ENCODE measurements at regions of chr7 and their contacts with region 1.

Region 1: DNA sequence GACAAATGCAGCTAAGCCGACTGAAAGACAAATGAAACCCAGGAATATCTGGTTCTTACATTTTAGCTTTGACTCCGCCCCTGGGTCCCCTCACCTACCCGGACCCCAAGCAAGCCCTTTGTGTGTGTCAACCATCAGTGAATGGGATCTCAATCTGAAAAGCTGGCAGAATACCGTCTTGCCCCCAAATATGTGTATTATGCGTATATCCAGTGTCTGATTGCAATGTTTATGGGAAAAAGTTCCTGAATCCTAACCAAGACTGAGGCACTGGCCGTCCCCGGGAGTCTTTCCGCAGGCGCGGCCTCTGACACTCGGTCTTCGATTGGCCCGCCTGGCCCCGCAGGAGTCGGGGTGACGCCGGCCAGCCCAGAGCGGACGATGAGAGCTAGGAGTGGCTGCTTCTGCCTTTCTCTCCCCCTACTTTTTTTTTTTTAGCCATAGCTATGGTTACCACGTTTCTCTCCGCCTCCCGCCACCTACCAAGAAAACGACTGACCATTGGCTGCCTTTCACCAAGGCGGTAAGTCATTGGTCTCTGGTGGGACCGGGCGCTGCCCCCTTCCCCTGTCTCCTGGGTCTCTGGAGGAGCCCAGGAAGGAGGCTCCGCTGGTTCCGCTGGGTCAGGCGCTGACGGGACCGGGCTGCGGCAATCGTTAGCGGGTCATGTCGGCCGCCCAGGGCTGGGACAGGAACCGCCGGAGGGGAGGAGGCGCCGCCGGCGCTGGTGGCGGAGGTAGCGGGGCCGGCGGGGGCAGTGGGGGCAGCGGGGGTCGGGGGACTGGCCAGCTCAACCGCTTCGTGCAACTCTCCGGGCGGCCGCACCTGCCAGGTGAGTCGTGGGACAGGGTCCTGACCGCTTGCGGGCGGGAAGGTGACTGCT is at the start of gene KLHDC10:
- DNase-seq: peak; percentile 97
- H3K4me3 Mint-ChIP-seq: peak within 1 kb of the TSS; percentile 88
- H3K27ac Mint-ChIP-seq: peak within 1 kb of the TSS; percentile 75
- H3K4me1 Mint-ChIP-seq: peaks cover 34% of the 10 kb centered on the region
- H3K27me3 Mint-ChIP-seq: no peaks in the 10 kb centered on the region
- total RNA-seq, gene KLHDC10: 15.5 to 17.3 TPM

Region 2: GRCh38 chr7:130047821-130048220 is 22.4 kb before region 1 on chr7:
- CTCF ChIA-PET with region 1: interaction called, 10 read pairs
- POLR2A ChIA-PET with region 1: interaction called, 12 read pairs
- DNase-seq: no peak
- H3K4me3 Mint-ChIP-seq: no peak overlapping the region
- H3K27ac Mint-ChIP-seq: no peak overlapping the region
- H3K4me1 Mint-ChIP-seq: peaks cover 20% of the 10 kb centered on the region
- H3K27me3 Mint-ChIP-seq: no peaks in the 10 kb centered on the region

Region 3: GRCh38 chr7:130084037-130084875 is 14.0 kb after region 1 on chr7:
- CTCF ChIA-PET with region 1: interaction called, 11 read pairs
- POLR2A ChIA-PET with region 1: no interaction called
- DNase-seq: no peak
- H3K4me3 Mint-ChIP-seq: no peak overlapping the region
- H3K27ac Mint-ChIP-seq: no peak overlapping the region
- H3K4me1 Mint-ChIP-seq: peaks cover 5% of the 10 kb centered on the region
- H3K27me3 Mint-ChIP-seq: no peaks in the 10 kb centered on the region

Region 4: GRCh38 chr7:130205084-130205947 is 135.1 kb after region 1 on chr7 and contains the start of gene TMEM209:
- CTCF ChIA-PET with region 1: interaction called, 9 read pairs
- POLR2A ChIA-PET with region 1: interaction called, 19 read pairs
- DNase-seq: peak; percentile 95
- H3K4me3 Mint-ChIP-seq: peak within 1 kb of the TSS; percentile 97
- H3K27ac Mint-ChIP-seq: peak within 1 kb of the TSS; percentile 94
- H3K4me1 Mint-ChIP-seq: peaks cover 42% of the 10 kb centered on the region
- H3K27me3 Mint-ChIP-seq: no peaks in the 10 kb centered on the region
- total RNA-seq, gene TMEM209: 35.5 to 35.7 TPM

Region 5: DNA sequence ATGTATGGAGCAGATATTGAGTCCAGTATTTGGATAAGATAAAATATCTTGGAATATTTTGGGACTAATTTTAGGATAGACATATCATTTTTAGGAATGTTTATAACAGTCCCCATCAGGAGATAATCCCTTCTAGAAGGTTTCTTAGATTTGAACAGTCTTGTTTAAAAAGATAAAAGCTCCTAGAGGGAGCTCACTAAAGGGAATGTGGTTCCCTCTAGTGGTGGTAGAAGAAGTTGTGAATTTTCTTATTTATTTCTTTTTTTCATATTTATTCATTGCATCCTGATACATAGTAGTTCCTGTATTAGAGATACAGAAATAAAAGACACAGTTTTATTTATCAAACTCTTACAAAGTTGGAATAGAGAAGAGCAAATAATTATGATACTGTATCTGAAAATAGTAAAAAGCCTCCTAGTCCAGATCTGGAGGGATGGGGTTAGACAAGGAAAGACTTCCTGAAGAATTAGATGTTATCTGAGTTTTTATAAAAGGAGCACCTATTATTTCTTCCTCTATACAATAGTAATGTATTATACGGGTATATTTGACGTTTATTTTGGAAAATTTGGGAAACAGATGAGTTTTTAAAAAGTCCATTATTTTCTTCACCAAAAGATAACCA is 688.3 kb after region 1 on chr7:
- CTCF ChIA-PET with region 1: interaction called, 45 read pairs
- POLR2A ChIA-PET with region 1: no interaction called
- DNase-seq: no peak
- H3K4me3 Mint-ChIP-seq: no peak overlapping the region
- H3K27ac Mint-ChIP-seq: no peak overlapping the region
- H3K4me1 Mint-ChIP-seq: no peaks in the 10 kb centered on the region
- H3K27me3 Mint-ChIP-seq: peaks cover 7% of the 10 kb centered on the region

Measured in activated CD4-positive, alpha-beta memory T cell treated with anti-CD3 and anti-CD28 coated beads, Interleukin-2, amount 10 ng/mL, durations not matched to agents 7 days and 5 days (primary cell).